ENCODE measurements at regions of chr7 and their contacts with region 1.

Region 1: GRCh38 chr7:55415173-55415778 is 50.1 kb downstream of the LANCL2 start:
- DNase-seq: no peak
- H3K4me3 ChIP-seq: no peak overlapping the region
- H3K27me3 ChIP-seq: no peaks in the 10 kb centered on the region
- CTCF ChIP-seq: peak; percentile 77

Region 2: DNA sequence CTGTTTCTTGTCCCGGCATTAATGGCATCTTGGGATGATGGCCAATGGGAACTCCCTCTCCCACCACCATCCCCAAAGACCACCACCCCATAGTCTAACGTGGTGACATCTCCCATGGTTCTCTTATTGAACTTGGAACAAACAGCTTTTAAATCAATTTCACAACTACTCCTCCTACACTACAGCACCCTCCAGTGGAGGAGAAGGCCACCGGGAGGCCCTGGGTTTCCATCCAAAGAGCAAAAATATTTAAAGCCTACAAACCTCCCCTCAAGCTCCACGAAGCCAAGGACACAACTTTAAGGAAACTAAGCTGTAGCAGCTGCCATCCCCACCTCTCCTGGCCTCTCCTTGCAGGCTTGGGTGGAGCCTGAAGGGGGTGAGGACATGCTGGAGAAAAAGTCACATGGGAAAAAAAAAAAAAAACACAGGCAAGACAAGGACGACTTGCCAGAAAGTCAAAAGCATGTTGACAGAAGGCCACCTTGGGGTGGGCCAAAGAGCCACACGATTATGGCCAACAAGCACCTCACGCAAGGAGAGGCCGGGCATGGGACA is 144.1 kb before region 1 on chr7:
- CTCF ChIA-PET with region 1: interaction called, 16 read pairs
- POLR2A ChIA-PET with region 1: no interaction called
- DNase-seq: no peak
- H3K4me3 ChIP-seq: no peak overlapping the region
- H3K27me3 ChIP-seq: peaks cover 24% of the 10 kb centered on the region
- CTCF ChIP-seq: peak; percentile 70

Region 3: DNA sequence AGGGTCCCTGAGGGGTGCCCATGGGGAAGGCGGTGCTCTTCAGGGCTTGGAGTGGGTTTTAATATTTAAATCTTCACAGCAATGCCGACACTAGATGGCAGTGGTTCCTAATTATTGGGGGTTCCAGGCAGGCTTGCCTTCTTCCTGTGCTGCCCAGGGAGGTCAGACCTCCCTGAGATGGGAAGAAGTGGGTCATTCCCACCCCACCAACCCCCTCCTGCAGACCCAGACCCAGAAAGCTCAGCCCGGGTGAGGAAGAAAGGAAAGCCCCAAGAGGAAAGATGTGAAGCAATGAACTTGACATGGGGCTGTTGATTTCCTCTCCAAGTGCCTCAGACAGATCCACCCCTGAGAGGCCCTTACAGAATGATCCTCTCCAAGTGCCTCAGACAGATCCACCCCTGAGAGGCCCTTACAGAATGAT is 135.2 kb before region 1 on chr7:
- CTCF ChIA-PET with region 1: interaction called, 53 read pairs
- POLR2A ChIA-PET with region 1: no interaction called
- DNase-seq: peak; percentile 5
- H3K4me3 ChIP-seq: no peak overlapping the region
- H3K27me3 ChIP-seq: peaks cover 6% of the 10 kb centered on the region
- CTCF ChIP-seq: peak; percentile 66

Region 4: GRCh38 chr7:55288070-55288824 is 127.0 kb before region 1 on chr7:
- CTCF ChIA-PET with region 1: interaction called, 53 read pairs
- POLR2A ChIA-PET with region 1: no interaction called
- DNase-seq: no peak
- H3K4me3 ChIP-seq: no peak overlapping the region
- H3K27me3 ChIP-seq: peaks cover 12% of the 10 kb centered on the region
- CTCF ChIP-seq: no peak

Region 5: GRCh38 chr7:55365675-55366460 is 49.4 kb before region 1 on chr7:
- CTCF ChIA-PET with region 1: interaction called, 10 read pairs
- POLR2A ChIA-PET with region 1: no interaction called
- DNase-seq: peak; percentile 57
- H3K4me3 ChIP-seq: peak overlapping the region; percentile 94
- H3K27me3 ChIP-seq: no peaks in the 10 kb centered on the region
- CTCF ChIP-seq: peak; percentile 4; the same call in 1 of the 2 replicates

Measured in BJ (cell line).